ENCODE measurements at regions of chr3 and their contacts with region 1.

Region 1: GRCh38 chr3:151384741-151385174 is at the start of gene P2RY12:
- DNase-seq: no peak
- ATAC-seq: peak; percentile 29
- H3K4me3 Mint-ChIP-seq: peak within 1 kb of the TSS; percentile 79
- H3K27ac Mint-ChIP-seq: peak within 1 kb of the TSS; percentile 97
- H3K4me1 Mint-ChIP-seq: peaks cover 76% of the 10 kb centered on the region
- H3K27me3 Mint-ChIP-seq: no peaks in the 10 kb centered on the region
- CTCF ChIP-seq: no peak
- total RNA-seq, gene P2RY12: 0.58 and 0.64 TPM in 2 replicates

Region 2: GRCh38 chr3:150582620-150583019 is 802.1 kb before region 1 on chr3:
- CTCF ChIA-PET with region 1: no interaction called
- POLR2A ChIA-PET with region 1: interaction called, 15 read pairs
- intact Hi-C with region 1: no loop called
- DNase-seq: no peak
- ATAC-seq: no peak
- H3K4me3 Mint-ChIP-seq: no peak overlapping the region
- H3K27ac Mint-ChIP-seq: peak overlapping the region; percentile 12
- H3K4me1 Mint-ChIP-seq: peaks cover 7% of the 10 kb centered on the region
- H3K27me3 Mint-ChIP-seq: no peaks in the 10 kb centered on the region
- CTCF ChIP-seq: no peak

Region 3: DNA sequence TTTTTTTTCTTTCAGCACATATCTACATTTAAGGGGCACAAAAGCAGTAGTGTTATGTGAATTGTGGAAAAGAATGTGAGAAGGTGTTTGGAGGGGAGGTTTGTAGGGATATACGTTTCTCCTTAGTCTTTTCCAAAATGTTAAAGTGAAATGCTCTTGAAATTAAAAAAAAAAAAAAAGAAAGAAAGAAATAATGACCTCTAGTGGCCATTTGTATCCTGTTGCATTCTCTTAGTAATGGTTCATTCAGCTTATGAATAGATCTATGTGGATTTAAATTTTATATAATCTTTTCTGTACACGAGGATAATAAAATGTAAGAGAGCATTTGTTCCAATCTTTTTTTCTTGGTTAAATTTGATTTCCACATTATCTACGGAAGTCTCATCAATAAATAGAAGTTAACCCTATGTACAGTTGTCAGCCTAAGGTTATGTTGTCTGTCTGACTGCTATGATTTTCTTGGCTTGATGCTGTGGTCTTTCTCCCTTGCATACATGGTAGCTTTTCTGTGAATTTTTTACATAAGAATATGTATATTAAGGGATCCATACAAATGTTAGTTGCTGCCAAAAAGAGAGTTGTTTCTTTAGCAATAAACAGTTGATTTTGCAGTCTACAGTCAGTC is 57.1 kb before region 1 on chr3:
- CTCF ChIA-PET with region 1: interaction called, 5 read pairs
- POLR2A ChIA-PET with region 1: no interaction called
- intact Hi-C with region 1: loop called (anchors 2 kb)
- DNase-seq: no peak
- ATAC-seq: peak; percentile 30
- H3K4me3 Mint-ChIP-seq: peak overlapping the region; percentile 82
- H3K27ac Mint-ChIP-seq: peak overlapping the region; percentile 90
- H3K4me1 Mint-ChIP-seq: peaks cover 33% of the 10 kb centered on the region
- H3K27me3 Mint-ChIP-seq: no peaks in the 10 kb centered on the region
- CTCF ChIP-seq: no peak

Region 4: GRCh38 chr3:151345859-151346258 is 38.9 kb before region 1 on chr3:
- CTCF ChIA-PET with region 1: no interaction called
- POLR2A ChIA-PET with region 1: interaction called, 3 read pairs
- intact Hi-C with region 1: loop called (anchors 5 kb)
- DNase-seq: no peak
- ATAC-seq: no peak
- H3K4me3 Mint-ChIP-seq: no peak overlapping the region
- H3K27ac Mint-ChIP-seq: no peak overlapping the region
- H3K4me1 Mint-ChIP-seq: peaks cover 15% of the 10 kb centered on the region
- H3K27me3 Mint-ChIP-seq: no peaks in the 10 kb centered on the region
- CTCF ChIP-seq: no peak

Region 5: DNA sequence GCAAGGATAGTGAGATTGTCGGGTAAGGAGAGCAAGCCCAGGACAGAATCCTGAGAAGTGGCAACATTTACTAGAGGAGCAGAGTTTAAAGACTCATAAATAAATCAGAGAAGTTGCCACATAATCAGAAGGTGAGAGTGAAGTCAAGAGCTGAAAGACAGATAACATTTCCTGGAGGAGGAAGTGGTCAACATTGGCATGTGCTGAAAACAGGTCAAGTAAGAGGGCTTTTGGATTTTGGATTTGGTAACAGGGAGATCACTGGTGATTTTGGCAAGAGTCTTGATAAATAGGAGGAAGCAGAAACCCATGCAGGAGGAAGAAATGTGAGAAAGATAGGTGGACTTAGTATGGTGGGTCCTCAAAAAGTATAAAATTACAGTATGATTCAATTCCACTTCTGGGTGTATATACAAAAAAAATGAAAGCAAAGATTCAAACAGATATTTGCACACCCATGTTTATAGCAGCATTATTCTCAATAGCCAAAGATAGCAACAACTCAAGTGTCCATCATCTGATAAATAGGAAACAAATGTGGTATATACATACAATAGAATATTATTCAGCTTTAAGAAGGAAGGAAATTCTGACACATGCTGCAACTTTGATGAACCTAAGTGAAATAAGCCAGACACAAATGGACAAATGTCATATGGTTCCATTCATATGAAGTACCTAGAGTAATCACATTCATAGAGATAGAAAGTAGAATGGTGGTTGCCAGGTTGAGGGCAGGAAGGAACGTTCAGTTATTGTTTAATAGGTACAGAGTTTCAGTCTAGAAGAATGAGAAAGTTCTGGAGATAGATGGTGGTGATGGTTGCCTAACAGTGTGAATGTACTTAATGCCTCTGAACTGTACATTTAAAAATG is 856.6 kb after region 1 on chr3:
- CTCF ChIA-PET with region 1: no interaction called
- POLR2A ChIA-PET with region 1: interaction called, 3 read pairs
- intact Hi-C with region 1: loop called (anchors 10 kb)
- DNase-seq: no peak
- ATAC-seq: no peak
- H3K4me3 Mint-ChIP-seq: peak overlapping the region; percentile 62
- H3K27ac Mint-ChIP-seq: peak overlapping the region; percentile 90
- H3K4me1 Mint-ChIP-seq: peaks cover 77% of the 10 kb centered on the region
- H3K27me3 Mint-ChIP-seq: no peaks in the 10 kb centered on the region
- CTCF ChIP-seq: no peak

Measured in activated B cell treated with CpG ODN at 0.5 μM for 24 hours (primary cell).